ENCODE measurements at regions of chr11 and their contacts with region 1.

Region 1: GRCh38 chr11:64448599-64449556 is 89.9 kb downstream of the RPS6KA4 start:
- DNase-seq: peak; percentile 84
- H3K4me3 Mint-ChIP-seq: peak overlapping the region; percentile 65
- H3K27ac Mint-ChIP-seq: no peak overlapping the region
- H3K4me1 Mint-ChIP-seq: peaks cover 17% of the 10 kb centered on the region
- H3K27me3 Mint-ChIP-seq: peaks cover 12% of the 10 kb centered on the region

Region 2: DNA sequence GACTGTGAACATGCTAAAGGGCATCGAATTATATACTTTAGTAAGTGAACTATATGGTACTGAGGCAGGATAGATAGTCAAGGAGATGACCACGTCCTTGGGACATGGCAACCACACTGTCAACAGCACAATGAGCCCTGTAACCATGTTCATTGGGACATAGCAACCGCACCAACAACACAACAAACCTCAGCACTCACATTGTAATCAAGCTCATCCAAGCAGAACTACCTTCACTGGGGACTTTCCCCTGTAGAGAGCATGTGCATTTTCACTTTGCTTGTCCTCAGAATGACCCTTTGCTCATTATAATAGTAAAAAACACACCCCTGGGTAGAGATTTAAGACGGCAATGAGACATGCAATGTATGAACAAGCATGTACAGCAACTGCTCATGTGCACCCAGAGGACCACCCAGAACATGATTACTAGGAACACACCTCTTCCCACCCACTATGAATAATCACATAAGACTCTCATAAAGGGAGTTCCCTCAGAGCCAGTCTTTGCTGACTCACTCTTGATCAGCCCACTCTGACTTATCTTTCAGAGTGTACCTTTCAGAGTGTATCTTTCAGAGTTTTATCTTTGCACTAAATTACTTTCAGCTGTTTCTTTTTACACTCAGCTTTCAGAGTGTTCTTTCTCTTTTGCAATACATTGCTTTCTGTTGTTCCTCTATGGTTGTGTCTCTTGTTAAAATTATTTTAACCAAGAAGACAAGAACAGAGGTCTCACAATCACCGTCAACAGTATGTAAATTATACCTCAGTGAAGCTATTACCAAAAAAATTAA is 881.6 kb before region 1 on chr11:
- CTCF ChIA-PET with region 1: no interaction called
- intact Hi-C with region 1: no loop called
- DNase-seq: peak; percentile 73
- H3K4me3 Mint-ChIP-seq: peak overlapping the region; percentile 64
- H3K27ac Mint-ChIP-seq: peak overlapping the region; percentile 79
- H3K4me1 Mint-ChIP-seq: peaks cover 41% of the 10 kb centered on the region
- H3K27me3 Mint-ChIP-seq: no peaks in the 10 kb centered on the region

Region 3: GRCh38 chr11:64489831-64490441 is 41.1 kb after region 1 on chr11:
- CTCF ChIA-PET with region 1: interaction called, 10 read pairs
- intact Hi-C with region 1: no loop called
- DNase-seq: peak; percentile 64
- H3K4me3 Mint-ChIP-seq: no peak overlapping the region
- H3K27ac Mint-ChIP-seq: no peak overlapping the region
- H3K4me1 Mint-ChIP-seq: peaks cover 14% of the 10 kb centered on the region
- H3K27me3 Mint-ChIP-seq: peaks cover 21% of the 10 kb centered on the region

Region 4: GRCh38 chr11:64538501-64539294 is 89.8 kb after region 1 on chr11:
- CTCF ChIA-PET with region 1: no interaction called
- intact Hi-C with region 1: no loop called
- DNase-seq: no peak
- H3K4me3 Mint-ChIP-seq: no peak overlapping the region
- H3K27ac Mint-ChIP-seq: no peak overlapping the region
- H3K4me1 Mint-ChIP-seq: no peaks in the 10 kb centered on the region
- H3K27me3 Mint-ChIP-seq: peaks cover 8% of the 10 kb centered on the region

Region 5: DNA sequence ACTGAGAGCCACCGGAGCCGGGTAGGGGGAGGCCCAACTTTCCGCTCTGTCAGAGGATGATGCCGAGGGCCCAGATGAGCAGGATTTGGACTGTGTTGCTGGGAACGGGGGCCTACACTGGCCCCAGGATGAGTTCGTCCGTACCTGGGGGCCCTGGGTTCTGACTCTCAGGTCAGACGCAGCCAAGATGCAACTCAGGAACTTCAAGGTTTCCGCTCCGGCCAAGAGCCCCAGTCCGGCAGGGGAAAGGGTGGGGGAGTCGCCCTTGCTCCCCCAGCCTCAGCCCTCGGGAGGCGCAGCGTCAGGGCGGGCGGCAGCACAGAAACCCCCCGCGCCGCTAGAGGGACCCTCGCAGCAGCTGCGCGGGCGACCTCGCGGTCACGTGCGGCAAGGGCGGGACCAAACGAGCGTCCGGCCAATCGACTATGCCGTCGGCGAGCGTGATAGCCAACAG is 564.8 kb after region 1 on chr11:
- CTCF ChIA-PET with region 1: no interaction called
- intact Hi-C with region 1: no loop called
- DNase-seq: peak; percentile 87
- H3K4me3 Mint-ChIP-seq: peak overlapping the region; percentile 85
- H3K27ac Mint-ChIP-seq: peak overlapping the region; percentile 96
- H3K4me1 Mint-ChIP-seq: peaks cover 27% of the 10 kb centered on the region
- H3K27me3 Mint-ChIP-seq: no peaks in the 10 kb centered on the region

Measured in activated naive CD4-positive, alpha-beta T cell treated with anti-CD3 and anti-CD28 coated beads for 36 hours (primary cell).